ENCODE measurements at regions of chr14 and their contacts with region 1.

Region 1: DNA sequence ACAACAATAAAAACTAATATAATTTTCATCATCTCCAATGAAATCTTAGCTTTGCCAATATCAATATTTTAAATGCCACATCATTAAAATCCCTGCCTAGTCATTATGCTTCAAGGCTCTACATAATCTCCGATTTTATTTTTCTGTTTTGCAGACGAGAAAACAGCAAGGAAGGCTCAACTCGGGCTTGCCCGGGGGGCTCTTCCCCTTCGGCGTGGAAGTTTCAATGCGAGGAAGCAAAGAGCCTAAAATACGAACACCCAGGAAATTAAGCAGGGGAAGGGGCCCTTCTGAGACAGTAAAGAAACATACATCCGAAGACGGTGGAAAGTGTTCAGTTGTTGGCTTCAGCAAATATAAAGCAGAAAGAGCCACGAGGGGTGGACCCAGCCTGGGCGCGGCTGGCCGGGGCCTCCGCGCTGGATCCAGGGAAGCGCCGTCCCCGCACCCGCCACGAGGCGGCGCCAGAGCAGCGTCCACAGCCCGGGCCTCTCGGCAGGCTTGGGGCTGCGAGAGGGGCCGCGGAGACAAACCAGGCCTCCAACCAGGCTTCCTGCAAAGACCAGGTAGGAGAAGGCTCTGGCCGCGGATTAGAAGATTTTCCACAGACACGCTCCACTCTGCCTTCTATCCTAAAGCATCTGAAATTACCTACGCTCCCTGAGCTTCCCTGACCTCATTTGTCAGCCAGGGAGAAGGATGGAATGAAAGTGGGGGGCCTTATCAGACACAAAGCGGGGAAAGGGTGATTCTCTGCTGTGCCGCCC is 77.2 kb downstream of the SERPINA3 start:
- DNase-seq: peak; percentile 34 to 72
- H3K4me3 ChIP-seq: no peak overlapping the region
- H3K27ac ChIP-seq: no peak overlapping the region
- H3K4me1 ChIP-seq: peaks cover 0 to 7% (median 7%) of the 10 kb centered on the region in 4 donors
- H3K27me3 ChIP-seq: peaks cover 0 to 8% of the 10 kb centered on the region in 2 donors
- CTCF ChIP-seq: peak; percentile 92 to 97

Region 2: GRCh38 chr14:94395888-94396574 is 293.4 kb before region 1 on chr14:
- intact Hi-C with region 1: no loop called
- DNase-seq: no peak
- H3K4me3 ChIP-seq: no peak overlapping the region
- H3K27ac ChIP-seq: no peak overlapping the region
- H3K4me1 ChIP-seq: peaks cover 0 to 6% (median 6%) of the 10 kb centered on the region in 4 donors
- H3K27me3 ChIP-seq: no peaks in the 10 kb centered on the region
- CTCF ChIP-seq: no peak

Region 3: GRCh38 chr14:94761348-94761996 is 72.1 kb after region 1 on chr14:
- intact Hi-C with region 1: no loop called
- DNase-seq: peak in 1 of 2 donors; percentile 64
- H3K4me3 ChIP-seq: no peak overlapping the region
- H3K27ac ChIP-seq: peak overlapping the region in 1 of 2 donors; percentile 11
- H3K4me1 ChIP-seq: no peaks in the 10 kb centered on the region
- H3K27me3 ChIP-seq: peaks cover 0 to 30% of the 10 kb centered on the region in 2 donors
- CTCF ChIP-seq: no peak

Region 4: GRCh38 chr14:95106971-95107370 is 417.6 kb after region 1 on chr14:
- intact Hi-C with region 1: loop called (anchors 10 kb)
- DNase-seq: no peak
- H3K4me3 ChIP-seq: no peak overlapping the region
- H3K27ac ChIP-seq: no peak overlapping the region
- H3K4me1 ChIP-seq: no peaks in the 10 kb centered on the region
- H3K27me3 ChIP-seq: no peaks in the 10 kb centered on the region
- CTCF ChIP-seq: no peak

Region 5: GRCh38 chr14:95431199-95432143 is 742.1 kb after region 1 on chr14:
- intact Hi-C with region 1: loop called (anchors 5 kb)
- DNase-seq: no peak
- H3K4me3 ChIP-seq: no peak overlapping the region
- H3K27ac ChIP-seq: no peak overlapping the region
- H3K4me1 ChIP-seq: peaks cover 0 to 8% (median 0%) of the 10 kb centered on the region in 4 donors
- H3K27me3 ChIP-seq: no peaks in the 10 kb centered on the region
- CTCF ChIP-seq: peak; percentile 46 to 50

Measured in tibial artery (tissue), 4 donors.